ENCODE measurements at regions of chr1 and their contacts with region 1.

Region 1: DNA sequence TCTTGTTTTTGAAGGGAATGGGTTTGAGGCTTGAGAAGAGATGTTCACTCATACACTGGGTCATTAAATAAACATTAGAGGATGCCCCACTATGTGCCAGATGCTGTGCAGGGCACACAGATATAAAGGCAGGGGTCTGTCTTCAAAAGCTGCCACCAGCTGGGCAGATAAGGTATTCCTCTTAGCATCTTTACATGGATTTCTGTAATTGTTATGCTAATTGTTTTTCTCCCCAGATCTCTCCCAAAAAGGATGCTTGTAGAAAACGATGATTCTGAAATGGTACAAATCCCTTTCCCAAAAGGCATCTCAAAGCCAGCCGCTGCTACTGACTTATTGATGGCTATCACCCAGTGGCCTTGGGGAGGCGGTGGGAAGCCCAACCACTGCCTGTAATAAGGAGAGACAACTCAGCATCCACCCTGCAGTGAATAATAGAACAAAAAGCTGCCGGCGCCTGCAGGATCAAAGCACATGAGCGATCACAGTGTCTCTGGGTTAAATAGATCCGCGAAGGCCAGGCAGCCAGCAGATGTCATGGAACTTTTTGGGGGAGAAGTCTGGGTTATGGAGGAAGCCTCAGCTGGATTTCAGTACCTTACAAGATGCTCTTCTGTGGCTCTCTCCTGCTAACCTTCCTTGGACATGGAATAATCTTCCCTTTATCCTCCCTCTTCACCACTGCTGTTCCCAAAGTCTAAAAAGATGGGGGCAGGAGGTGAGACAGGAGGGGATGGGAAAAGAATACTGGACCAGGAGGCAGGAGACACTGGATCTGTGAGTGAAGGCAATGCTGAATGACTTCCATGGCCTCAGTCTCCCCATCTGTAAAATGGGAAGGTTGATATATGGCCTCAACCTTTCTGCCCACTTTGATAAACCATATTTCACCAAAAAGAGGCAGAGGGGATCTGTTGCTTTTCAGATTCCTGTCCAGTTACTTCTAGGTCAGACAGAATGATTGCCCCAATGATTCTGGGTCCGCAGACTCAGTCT is 54.8 kb upstream of the CD34 start:
- DNase-seq: peak in 1 of 2 experiments; percentile 20
- H3K4me3 ChIP-seq: no peak overlapping the region
- H3K4me1 ChIP-seq: peaks cover 7% of the 10 kb centered on the region
- H3K27me3 ChIP-seq: no peaks in the 10 kb centered on the region

Region 2: GRCh38 chr1:207883104-207883651 is 82.5 kb before region 1 on chr1:
- in situ Hi-C with region 1: loop called (anchors 5 kb)
- DNase-seq: no peak
- H3K4me3 ChIP-seq: no peak overlapping the region
- H3K4me1 ChIP-seq: no peaks in the 10 kb centered on the region
- H3K27me3 ChIP-seq: peaks cover 2% of the 10 kb centered on the region